ENCODE measurements at regions of chr17 and their contacts with region 1.

Region 1: GRCh38 chr17:45218895-45219661 is 2.6 kb upstream of the FMNL1 start:
- DNase-seq: peak; percentile 92
- ATAC-seq: no peak
- H3K4me3 Mint-ChIP-seq: peak overlapping the region; percentile 78
- H3K27ac Mint-ChIP-seq: peak overlapping the region; percentile 79
- H3K4me1 Mint-ChIP-seq: peaks cover 33% of the 10 kb centered on the region
- H3K27me3 Mint-ChIP-seq: no peaks in the 10 kb centered on the region

Region 2: DNA sequence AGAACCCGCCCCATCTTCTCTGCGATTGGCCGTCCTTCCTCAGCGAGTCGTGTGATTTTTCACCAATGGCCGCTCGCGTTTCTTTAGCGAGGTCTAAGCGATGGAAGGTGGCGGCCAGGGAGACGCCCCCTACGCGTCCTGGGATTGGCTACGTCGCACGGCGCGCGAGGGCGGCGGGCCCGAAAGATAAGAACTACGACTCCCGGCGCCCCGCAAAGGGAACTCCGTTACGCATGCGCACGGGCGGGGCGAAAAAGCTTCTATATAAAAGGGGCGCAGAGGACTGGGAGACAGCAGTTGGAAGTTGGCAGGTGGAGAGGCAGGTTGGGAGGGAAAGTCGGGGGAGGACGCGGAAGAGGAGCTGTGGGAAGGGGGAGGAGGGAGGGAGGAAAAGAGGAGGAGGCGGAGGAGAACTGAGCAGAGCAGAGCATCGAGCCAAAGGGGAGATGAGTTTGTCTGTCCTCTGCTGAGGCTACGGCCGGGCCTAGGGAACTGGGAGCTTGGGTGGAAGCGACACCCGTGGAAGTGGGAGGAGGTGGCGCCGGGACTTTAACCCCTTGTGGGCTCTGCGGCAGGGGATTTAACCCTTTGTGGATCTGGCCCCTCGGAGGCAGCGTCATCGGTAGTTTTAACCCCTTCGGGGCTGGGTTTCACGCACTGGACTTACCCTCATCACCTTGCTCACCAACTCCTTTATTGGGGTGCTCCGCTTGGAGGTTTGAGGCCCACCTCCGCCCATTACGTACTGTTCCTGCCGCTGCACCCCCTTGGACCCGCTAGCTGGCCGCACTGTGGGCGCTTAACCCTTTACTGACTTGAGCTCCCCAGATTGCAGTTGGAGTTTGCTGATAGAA is 70.7 kb before region 1 on chr17 and contains the start of gene HEXIM1:
- CTCF ChIA-PET with region 1: interaction called, 25 read pairs
- POLR2A ChIA-PET with region 1: interaction called, 11 read pairs
- intact Hi-C with region 1: no loop called
- DNase-seq: peak; percentile 99
- ATAC-seq: peak; percentile 78
- H3K4me3 Mint-ChIP-seq: peak within 1 kb of the TSS; percentile 99
- H3K27ac Mint-ChIP-seq: peak within 1 kb of the TSS; percentile 100
- H3K4me1 Mint-ChIP-seq: peaks cover 37% of the 10 kb centered on the region
- H3K27me3 Mint-ChIP-seq: no peaks in the 10 kb centered on the region
- total RNA-seq, gene HEXIM1: 27.1 to 27.3 TPM

Region 3: GRCh38 chr17:45247429-45248131 is 28.5 kb after region 1 on chr17:
- CTCF ChIA-PET with region 1: interaction called, 21 read pairs
- POLR2A ChIA-PET with region 1: no interaction called
- intact Hi-C with region 1: no loop called
- DNase-seq: peak; percentile 99
- ATAC-seq: peak; percentile 89
- H3K4me3 Mint-ChIP-seq: peak overlapping the region; percentile 83
- H3K27ac Mint-ChIP-seq: peak overlapping the region; percentile 92
- H3K4me1 Mint-ChIP-seq: peaks cover 57% of the 10 kb centered on the region
- H3K27me3 Mint-ChIP-seq: no peaks in the 10 kb centered on the region

Region 4: DNA sequence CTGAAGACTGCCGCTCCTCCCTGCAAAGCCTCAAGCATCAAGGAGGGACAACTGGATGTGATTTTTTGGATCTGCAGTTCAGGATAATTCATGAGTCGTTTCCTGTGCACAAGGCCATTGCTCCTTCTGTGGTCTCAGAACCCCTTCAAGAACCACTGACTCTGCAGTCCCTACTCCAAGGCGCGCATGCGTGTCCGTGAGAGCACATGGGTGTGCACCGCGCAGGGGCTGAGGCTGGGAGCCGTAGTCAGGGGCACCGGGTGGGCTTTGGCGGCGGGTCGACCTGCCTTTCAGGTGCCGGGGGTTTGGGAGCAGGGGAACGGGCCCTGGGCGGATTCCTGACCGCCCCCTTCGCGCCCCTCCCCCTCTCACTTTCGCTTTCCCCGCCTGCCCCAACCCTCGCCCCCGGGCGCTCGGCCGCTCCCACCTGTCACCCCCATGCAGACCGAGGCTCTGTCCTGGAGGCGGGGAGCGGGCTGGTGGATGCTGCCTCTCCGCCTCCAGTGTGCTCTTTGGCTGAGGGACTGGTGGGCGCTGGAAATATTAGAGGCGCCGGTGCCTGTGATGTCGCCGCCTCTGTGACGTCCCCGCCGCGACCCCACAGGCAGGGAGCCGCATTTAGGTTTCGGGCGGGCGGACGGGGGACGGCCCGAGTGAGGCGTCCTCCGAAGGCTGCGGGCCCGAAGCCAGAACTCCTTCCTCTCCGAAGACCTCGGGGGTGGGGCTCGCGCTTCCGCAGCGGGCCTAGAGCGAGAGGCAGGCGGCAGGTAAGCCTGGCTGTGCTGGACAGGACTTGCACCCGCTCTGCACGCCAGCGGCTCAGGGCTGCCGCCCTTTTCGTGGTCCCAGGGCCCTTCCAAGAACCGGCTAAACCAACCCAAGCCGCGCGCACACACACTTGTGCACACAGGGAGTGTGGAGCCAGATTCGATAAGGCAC is 42.8 kb after region 1 on chr17 and contains the start of gene SPATA32:
- CTCF ChIA-PET with region 1: interaction called, 19 read pairs
- POLR2A ChIA-PET with region 1: interaction called, 4 read pairs
- intact Hi-C with region 1: loop called (anchors 1 kb)
- DNase-seq: peak; percentile 81
- ATAC-seq: peak; percentile 80
- H3K4me3 Mint-ChIP-seq: peak within 1 kb of the TSS; percentile 59
- H3K27ac Mint-ChIP-seq: peak within 1 kb of the TSS; percentile 72
- H3K4me1 Mint-ChIP-seq: peaks cover 34% of the 10 kb centered on the region
- H3K27me3 Mint-ChIP-seq: no peaks in the 10 kb centered on the region
- total RNA-seq, gene SPATA32: 0.21 to 0.25 TPM

Region 5: GRCh38 chr17:45385331-45385997 is 166.4 kb after region 1 on chr17:
- CTCF ChIA-PET with region 1: interaction called, 41 read pairs
- POLR2A ChIA-PET with region 1: interaction called, 3 read pairs
- intact Hi-C with region 1: loop called (anchors 1 kb)
- DNase-seq: peak; percentile 96
- ATAC-seq: peak; percentile 96
- H3K4me3 Mint-ChIP-seq: no peak overlapping the region
- H3K27ac Mint-ChIP-seq: peak overlapping the region; percentile 71
- H3K4me1 Mint-ChIP-seq: peaks cover 14% of the 10 kb centered on the region
- H3K27me3 Mint-ChIP-seq: peaks cover 4% of the 10 kb centered on the region

Measured in activated CD4-positive, alpha-beta T cell treated with anti-CD3 and anti-CD28 coated beads for 36 hours (primary cell).